Endothelial cell of umbilical vein (primary cell): ENCODE measurements at regions of chr1 and their contacts with region 1.

Region 1: DNA sequence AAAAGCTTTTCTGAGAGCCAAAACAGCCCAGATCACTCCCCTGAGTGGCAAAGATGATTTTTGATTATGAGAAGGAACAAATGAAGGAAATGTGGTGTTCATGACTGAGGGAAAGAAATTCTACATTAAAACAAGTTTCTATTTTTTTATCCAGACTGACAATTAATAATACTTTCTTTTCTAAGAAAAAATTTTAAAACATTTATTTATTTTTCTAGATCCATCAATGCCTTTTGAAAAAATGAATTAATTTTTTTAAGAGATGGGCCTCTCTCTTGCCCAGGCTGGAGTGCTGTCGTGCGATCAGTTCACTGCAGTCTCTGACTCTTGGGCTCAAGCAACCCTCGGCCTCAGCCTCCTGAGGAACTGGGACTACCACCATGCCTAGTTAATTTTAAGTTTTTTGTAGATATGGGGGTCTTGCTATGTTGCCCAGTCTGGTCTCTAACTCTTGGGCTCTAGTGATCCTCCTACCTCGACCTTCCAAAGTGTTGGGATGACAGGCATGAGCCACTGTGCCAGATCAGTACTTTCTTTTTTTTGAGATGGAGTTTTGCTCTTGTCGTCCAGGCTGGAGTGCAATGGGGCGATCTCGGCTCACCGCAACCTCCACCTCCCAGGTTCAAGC is 11.2 kb upstream of the TXNIP start:
- DNase-seq: no peak
- H3K4me3 ChIP-seq: no peak overlapping the region
- H3K27ac ChIP-seq: no peak overlapping the region
- H3K4me1 ChIP-seq: peaks cover 4% of the 10 kb centered on the region
- H3K27me3 ChIP-seq: no peaks in the 10 kb centered on the region
- CTCF ChIP-seq: no peak
- POLR2A ChIP-seq: no peak

Region 2: GRCh38 chr1:145927063-145927886 is 80.3 kb before region 1 on chr1 and contains the start of gene RBM8A:
- CTCF ChIA-PET with region 1: interaction called, 13 read pairs
- POLR2A ChIA-PET with region 1: no interaction called
- dilution Hi-C with region 1: no loop called
- intact Hi-C with region 1: no loop called
- DNase-seq: peak; percentile 99
- H3K4me3 ChIP-seq: peak within 1 kb of the TSS; percentile 80 to 89 (median 80)
- H3K27ac ChIP-seq: peak within 1 kb of the TSS; percentile 94
- H3K4me1 ChIP-seq: peaks cover 8% of the 10 kb centered on the region
- H3K27me3 ChIP-seq: no peaks in the 10 kb centered on the region
- CTCF ChIP-seq: peak; percentile 64 to 70
- POLR2A ChIP-seq: peak; percentile 88
- total RNA-seq, gene RBM8A: 194 and 200 TPM in 2 replicates

Region 3: GRCh38 chr1:145972580-145972979 is 35.0 kb before region 1 on chr1:
- CTCF ChIA-PET with region 1: interaction called, 496 read pairs
- POLR2A ChIA-PET with region 1: no interaction called
- dilution Hi-C with region 1: no loop called
- intact Hi-C with region 1: loop called (anchors 1 kb)
- DNase-seq: no peak
- H3K4me3 ChIP-seq: no peak overlapping the region
- H3K27ac ChIP-seq: no peak overlapping the region
- H3K4me1 ChIP-seq: peaks cover under 1% of the 10 kb centered on the region
- H3K27me3 ChIP-seq: no peaks in the 10 kb centered on the region
- CTCF ChIP-seq: no peak
- POLR2A ChIP-seq: no peak

Region 4: GRCh38 chr1:145996433-145997015 is 11.1 kb before region 1 on chr1 and contains the start of gene TXNIP:
- CTCF ChIA-PET with region 1: interaction called, 496 read pairs
- POLR2A ChIA-PET with region 1: no interaction called
- dilution Hi-C with region 1: no loop called
- intact Hi-C with region 1: no loop called
- DNase-seq: peak; percentile 97
- H3K4me3 ChIP-seq: peak within 1 kb of the TSS; percentile 97 to 98 (median 98)
- H3K27ac ChIP-seq: peak within 1 kb of the TSS; percentile 4
- H3K4me1 ChIP-seq: peaks cover 19% of the 10 kb centered on the region
- H3K27me3 ChIP-seq: no peaks in the 10 kb centered on the region
- CTCF ChIP-seq: no peak
- POLR2A ChIP-seq: peak; percentile 77
- total RNA-seq, gene TXNIP: 7.6 and 9.1 TPM in 2 replicates

Region 5: GRCh38 chr1:146036965-146037646 is 29.5 kb after region 1 on chr1:
- CTCF ChIA-PET with region 1: interaction called, 10 read pairs
- POLR2A ChIA-PET with region 1: no interaction called
- dilution Hi-C with region 1: no loop called
- intact Hi-C with region 1: no loop called
- DNase-seq: peak; percentile 94
- H3K4me3 ChIP-seq: peak overlapping the region; percentile 53 to 90 (median 64)
- H3K27ac ChIP-seq: peak overlapping the region; percentile 69
- H3K4me1 ChIP-seq: peaks cover 9% of the 10 kb centered on the region
- H3K27me3 ChIP-seq: no peaks in the 10 kb centered on the region
- CTCF ChIP-seq: no peak
- POLR2A ChIP-seq: no peak